ENCODE measurements at regions of chr2 and their contacts with region 1.

Region 1: GRCh38 chr2:38634684-38635083 is 31.2 kb upstream of the GALM start:
- DNase-seq: no peak
- H3K4me3 Mint-ChIP-seq: no peak overlapping the region
- H3K27ac Mint-ChIP-seq: no peak overlapping the region
- H3K4me1 Mint-ChIP-seq: peaks cover 16% of the 10 kb centered on the region
- H3K27me3 Mint-ChIP-seq: no peaks in the 10 kb centered on the region

Region 2: DNA sequence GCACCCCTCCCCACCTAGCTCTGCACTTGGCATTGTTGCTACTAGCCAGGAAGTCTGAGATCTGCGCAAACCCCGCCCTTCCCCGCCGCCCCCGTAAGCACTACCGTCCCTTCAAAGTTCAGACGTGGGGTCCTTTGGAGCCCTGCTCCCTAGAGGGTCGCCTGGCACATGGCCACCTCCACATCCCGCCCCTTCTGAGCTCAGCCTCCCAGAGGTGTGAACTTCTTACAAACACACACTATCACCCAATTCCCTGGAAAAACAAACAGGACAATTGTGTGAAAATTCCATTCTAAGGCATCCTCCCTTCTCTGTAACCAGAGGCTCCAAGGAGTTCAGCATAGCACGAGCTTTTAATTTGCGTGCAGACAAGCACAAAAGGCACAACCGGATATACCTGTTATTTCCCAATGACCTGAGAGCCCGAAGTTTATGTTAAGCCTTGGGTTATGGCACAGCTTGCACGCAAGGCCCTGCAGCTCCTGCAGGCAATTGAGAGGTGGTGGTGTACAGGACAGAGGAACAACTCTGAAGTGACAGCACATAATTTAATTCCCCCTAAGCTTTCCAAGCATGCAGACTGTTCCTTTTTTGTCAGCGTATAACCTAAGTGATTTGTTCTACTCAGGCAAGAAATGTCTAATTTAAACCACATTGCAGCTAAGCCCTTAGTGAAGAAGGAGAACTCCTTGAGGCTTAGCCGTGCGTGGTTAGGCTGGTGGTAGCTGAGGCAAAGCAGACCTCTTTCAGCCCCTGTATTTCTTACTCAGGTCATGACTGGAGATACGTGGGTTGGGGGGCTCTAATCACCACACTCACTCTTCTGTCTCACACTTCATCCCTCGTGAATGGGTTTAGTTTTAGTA is 538.5 kb before region 1 on chr2:
- CTCF ChIA-PET with region 1: no interaction called
- intact Hi-C with region 1: no loop called
- DNase-seq: no peak
- H3K4me3 Mint-ChIP-seq: no peak overlapping the region
- H3K27ac Mint-ChIP-seq: no peak overlapping the region
- H3K4me1 Mint-ChIP-seq: peaks cover 7% of the 10 kb centered on the region
- H3K27me3 Mint-ChIP-seq: peaks cover 60% of the 10 kb centered on the region

Region 3: DNA sequence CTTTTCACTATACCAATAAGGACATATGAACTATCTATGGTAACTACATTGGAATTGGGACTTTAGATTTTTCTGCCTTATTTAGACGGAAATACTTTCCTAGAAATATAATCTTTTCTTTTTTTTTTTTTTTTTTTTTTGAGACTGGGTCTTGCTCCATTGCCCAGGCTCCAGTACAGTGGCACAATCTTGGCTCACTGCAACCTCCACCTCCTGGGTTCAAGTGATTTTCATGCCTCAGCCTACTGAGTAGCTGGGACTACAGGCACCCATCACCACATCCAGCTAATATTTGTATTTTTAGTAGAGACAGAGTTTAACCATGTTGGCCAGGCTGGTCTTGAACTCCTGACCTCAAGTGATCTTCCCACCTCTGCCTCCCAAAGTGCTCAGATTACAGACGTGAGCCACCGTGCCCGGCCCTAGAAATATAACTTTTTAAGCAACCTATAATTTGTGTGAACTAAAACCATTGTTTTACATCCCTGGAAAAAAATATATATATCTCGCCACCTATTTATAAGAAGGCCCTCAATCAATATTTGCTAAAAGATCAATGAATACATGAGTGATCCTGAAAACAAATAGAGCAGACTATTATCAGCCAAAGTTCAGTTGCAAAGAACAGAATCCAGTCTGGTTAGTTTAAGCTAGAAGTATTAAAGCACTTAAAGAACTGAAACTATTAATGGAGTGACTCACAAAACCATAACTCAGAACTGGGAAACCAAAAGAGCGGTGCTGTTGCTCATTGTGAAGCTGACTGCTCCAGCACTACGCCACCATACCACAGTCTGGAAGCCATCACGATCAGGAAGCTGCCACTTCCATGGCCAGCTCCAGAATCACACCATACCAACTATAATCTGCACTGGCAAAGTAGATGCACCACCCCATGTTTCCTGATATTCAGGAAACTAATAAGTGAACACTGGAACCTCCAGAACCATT is 23.6 kb before region 1 on chr2:
- CTCF ChIA-PET with region 1: interaction called, 3 read pairs
- intact Hi-C with region 1: loop called (anchors 2 kb)
- DNase-seq: peak; percentile 40
- H3K4me3 Mint-ChIP-seq: no peak overlapping the region
- H3K27ac Mint-ChIP-seq: no peak overlapping the region
- H3K4me1 Mint-ChIP-seq: peaks cover 68% of the 10 kb centered on the region
- H3K27me3 Mint-ChIP-seq: no peaks in the 10 kb centered on the region

Measured in activated naive CD4-positive, alpha-beta T cell treated with anti-CD3 and anti-CD28 coated beads for 36 hours (primary cell).